ENCODE measurements at regions of chr6 and their contacts with region 1.

Region 1: GRCh38 chr6:80338201-80338836 is 231.8 kb downstream of the BCKDHB start:
- DNase-seq: peak; percentile 29
- H3K4me3 ChIP-seq: no peak overlapping the region
- H3K27ac ChIP-seq: no peak overlapping the region
- H3K4me1 ChIP-seq: no peaks in the 10 kb centered on the region
- H3K27me3 ChIP-seq: no peaks in the 10 kb centered on the region
- CTCF ChIP-seq: peak; percentile 76 to 92

Region 2: DNA sequence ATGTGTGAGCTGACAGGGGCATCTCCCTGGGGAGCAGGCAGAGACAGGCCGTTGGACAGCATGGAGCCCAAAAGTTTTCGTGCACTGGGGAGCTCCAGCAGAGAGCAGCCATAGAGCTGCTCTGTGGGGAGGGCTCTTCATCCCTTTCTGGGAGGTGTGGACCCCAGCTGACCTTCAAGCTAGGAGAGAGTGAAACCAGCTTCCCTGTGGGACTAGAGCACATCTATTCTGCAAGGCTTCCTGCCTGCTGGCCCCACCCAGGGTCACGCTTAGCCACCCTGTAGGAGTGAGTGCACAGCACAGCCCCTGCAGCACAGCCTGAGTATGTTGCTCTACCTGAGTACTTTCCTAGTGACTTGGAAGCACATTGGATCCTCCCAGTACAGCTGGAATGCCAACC is 48.6 kb before region 1 on chr6:
- CTCF ChIA-PET with region 1: no interaction called
- dilution Hi-C with region 1: no loop called
- in situ Hi-C with region 1: no loop called
- intact Hi-C with region 1: no loop called
- DNase-seq: no peak
- H3K4me3 ChIP-seq: no peak overlapping the region
- H3K27ac ChIP-seq: no peak overlapping the region
- H3K4me1 ChIP-seq: no peaks in the 10 kb centered on the region
- H3K27me3 ChIP-seq: no peaks in the 10 kb centered on the region
- CTCF ChIP-seq: no peak

Region 3: GRCh38 chr6:80480421-80481157 is 142.3 kb after region 1 on chr6:
- CTCF ChIA-PET with region 1: no interaction called
- dilution Hi-C with region 1: no loop called
- in situ Hi-C with region 1: no loop called
- intact Hi-C with region 1: loop called (anchors 1 kb)
- DNase-seq: no peak
- H3K4me3 ChIP-seq: no peak overlapping the region
- H3K27ac ChIP-seq: no peak overlapping the region
- H3K4me1 ChIP-seq: no peaks in the 10 kb centered on the region
- H3K27me3 ChIP-seq: no peaks in the 10 kb centered on the region
- CTCF ChIP-seq: no peak

Region 4: GRCh38 chr6:80733641-80734040 is 395.3 kb after region 1 on chr6:
- CTCF ChIA-PET with region 1: no interaction called
- dilution Hi-C with region 1: no loop called
- in situ Hi-C with region 1: no loop called
- intact Hi-C with region 1: loop called (anchors 10 kb)
- DNase-seq: no peak
- H3K4me3 ChIP-seq: no peak overlapping the region
- H3K27ac ChIP-seq: no peak overlapping the region
- H3K4me1 ChIP-seq: no peaks in the 10 kb centered on the region
- H3K27me3 ChIP-seq: no peaks in the 10 kb centered on the region
- CTCF ChIP-seq: no peak

Region 5: GRCh38 chr6:80940571-80940970 is 602.3 kb after region 1 on chr6:
- CTCF ChIA-PET with region 1: no interaction called
- dilution Hi-C with region 1: no loop called
- in situ Hi-C with region 1: no loop called
- intact Hi-C with region 1: no loop called
- DNase-seq: no peak
- H3K4me3 ChIP-seq: no peak overlapping the region
- H3K27ac ChIP-seq: no peak overlapping the region
- H3K4me1 ChIP-seq: no peaks in the 10 kb centered on the region
- H3K27me3 ChIP-seq: no peaks in the 10 kb centered on the region
- CTCF ChIP-seq: no peak

Measured in mammary epithelial cell (primary cell).